Spleen (tissue), 13 donors: ENCODE measurements at regions of chr3 and their contacts with region 1.

Region 1: DNA sequence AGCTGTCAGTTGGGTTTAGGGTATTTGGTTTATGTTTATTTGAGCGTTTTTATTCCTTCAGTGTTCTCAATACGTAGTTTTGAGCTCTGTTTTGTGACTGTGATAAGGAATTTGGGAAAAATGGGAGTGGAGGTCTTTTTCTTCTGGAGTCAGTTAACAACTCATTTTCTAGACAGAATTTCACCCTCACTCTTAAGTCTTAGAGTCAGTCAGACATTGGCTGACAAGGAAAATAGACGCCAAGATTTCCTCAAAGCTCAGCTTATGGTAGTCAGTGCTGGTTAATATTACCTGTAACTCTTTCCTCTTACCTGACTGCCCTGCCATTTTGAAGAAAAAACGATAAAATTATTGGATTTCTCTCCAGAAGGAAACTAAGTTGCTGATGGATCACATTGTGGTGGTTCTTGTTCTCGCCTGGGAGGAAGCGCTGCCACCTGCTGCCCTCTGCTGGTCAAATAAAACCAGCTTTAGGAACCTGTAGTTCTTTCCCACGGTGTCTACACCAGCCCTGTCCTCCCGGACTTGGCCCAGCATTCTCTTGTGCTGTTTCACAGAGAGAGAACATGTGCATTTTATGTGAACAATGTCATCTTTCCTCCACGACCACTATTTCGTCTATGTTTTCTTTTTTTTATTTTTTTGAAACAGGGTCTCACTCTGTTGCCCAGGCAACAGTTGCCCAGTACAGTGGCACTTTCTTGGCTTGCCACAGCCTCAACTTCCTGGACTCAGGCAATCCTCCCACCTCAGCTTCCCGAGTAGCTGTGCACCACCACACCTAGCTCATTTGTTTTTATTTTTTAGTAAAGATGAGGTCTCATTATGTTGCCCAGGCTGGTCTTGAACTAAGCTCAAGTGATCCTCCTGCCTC is 41.4 kb upstream of the UMPS start:
- DNase-seq: peak; percentile 85
- H3K4me3 ChIP-seq: no peak overlapping the region
- H3K27ac ChIP-seq: no peak overlapping the region
- H3K4me1 ChIP-seq: peaks cover 0 to 17% (median 12%) of the 10 kb centered on the region in 6 donors
- H3K27me3 ChIP-seq: peaks cover 0 to 4% (median 0%) of the 10 kb centered on the region in 7 donors
- CTCF ChIP-seq: peak; percentile 51 to 85 (median 79)
- POLR2A ChIP-seq: no peak

Region 2: DNA sequence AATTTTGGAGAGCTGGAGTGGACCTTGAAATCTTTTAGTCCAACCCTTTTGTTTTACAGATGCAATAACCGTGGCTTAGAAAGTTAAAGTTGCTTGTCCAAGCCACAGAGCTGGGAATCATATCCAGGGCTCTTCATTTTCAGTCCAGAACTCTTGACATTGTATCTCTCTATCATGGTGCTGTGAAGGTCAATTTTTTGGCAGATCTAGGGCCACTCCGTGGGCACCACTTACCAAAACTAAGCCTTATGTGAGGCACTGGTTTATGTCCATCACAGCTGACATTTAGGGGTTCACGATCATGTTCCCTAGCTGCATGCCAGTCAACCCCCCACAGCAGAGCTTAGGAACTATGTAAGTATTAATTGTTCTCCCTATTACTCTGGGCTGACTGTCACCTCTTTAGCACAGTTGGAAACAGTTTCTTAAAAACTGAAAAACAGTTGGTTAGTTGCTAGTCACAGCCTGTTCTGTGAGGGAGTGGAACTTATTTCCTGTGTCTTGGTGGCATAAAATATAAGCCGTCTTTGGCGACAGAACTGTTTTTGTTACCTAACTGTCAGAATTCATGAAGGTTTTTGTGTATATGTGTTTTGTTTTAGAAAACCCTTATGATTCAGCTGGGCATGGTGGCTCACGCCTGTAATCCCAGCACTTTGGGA is 148.1 kb before region 1 on chr3:
- intact Hi-C with region 1: no loop called
- DNase-seq: no peak
- H3K4me3 ChIP-seq: no peak overlapping the region
- H3K27ac ChIP-seq: no peak overlapping the region
- H3K4me1 ChIP-seq: no peaks in the 10 kb centered on the region
- H3K27me3 ChIP-seq: peaks cover 0 to 27% (median 0%) of the 10 kb centered on the region in 7 donors
- CTCF ChIP-seq: no peak
- POLR2A ChIP-seq: no peak

Region 3: DNA sequence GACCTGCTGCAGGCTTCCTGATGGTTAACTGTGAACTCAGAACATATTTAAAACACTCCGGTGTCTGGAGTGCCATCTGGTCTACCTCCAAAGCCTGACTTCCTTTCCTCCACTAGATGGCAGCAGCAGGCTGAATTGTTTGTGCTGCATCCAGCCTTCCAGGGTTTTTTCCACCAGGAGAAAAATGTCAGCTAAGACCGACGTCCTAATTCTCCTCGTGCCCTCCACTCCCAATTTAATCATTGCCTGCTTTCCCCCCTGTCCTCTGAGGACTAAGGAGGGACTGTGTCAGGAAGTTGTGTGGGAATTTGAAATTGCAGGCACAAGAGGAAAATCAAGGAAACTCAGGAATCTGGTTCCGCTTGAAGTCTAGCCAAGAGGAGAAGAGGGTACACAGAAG is 123.8 kb before region 1 on chr3:
- intact Hi-C with region 1: loop called (anchors 5 kb)
- DNase-seq: no peak
- H3K4me3 ChIP-seq: no peak overlapping the region
- H3K27ac ChIP-seq: no peak overlapping the region
- H3K4me1 ChIP-seq: peaks cover 0 to 16% (median 8%) of the 10 kb centered on the region in 6 donors
- H3K27me3 ChIP-seq: no peaks in the 10 kb centered on the region
- CTCF ChIP-seq: peak; percentile 67 to 88 (median 84)
- POLR2A ChIP-seq: no peak

Region 4: DNA sequence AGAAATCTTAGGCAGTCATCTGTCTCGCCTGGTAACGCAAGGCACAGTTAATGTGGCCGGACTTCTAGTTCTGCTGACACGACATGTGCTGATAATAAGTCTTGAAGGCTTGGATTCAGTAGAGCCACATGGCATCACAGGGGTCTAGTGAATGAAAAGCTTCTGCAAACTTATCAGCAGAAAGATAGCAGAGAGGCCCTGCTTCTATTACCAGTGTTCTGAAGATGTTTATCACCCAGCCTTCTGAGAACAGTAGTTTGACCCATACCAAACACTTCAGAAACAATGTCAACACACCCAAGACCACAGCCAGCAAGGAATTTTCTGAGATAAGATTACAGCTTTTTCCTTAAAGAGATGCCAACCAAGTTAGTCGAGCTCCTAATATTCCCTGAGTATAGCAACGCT is 61.3 kb before region 1 on chr3:
- intact Hi-C with region 1: no loop called
- DNase-seq: no peak
- H3K4me3 ChIP-seq: no peak overlapping the region
- H3K27ac ChIP-seq: no peak overlapping the region
- H3K4me1 ChIP-seq: no peaks in the 10 kb centered on the region
- H3K27me3 ChIP-seq: no peaks in the 10 kb centered on the region
- CTCF ChIP-seq: no peak
- POLR2A ChIP-seq: no peak